Panc1 (cell line): ENCODE measurements at regions of chr21 and their contacts with region 1.

Region 1: DNA sequence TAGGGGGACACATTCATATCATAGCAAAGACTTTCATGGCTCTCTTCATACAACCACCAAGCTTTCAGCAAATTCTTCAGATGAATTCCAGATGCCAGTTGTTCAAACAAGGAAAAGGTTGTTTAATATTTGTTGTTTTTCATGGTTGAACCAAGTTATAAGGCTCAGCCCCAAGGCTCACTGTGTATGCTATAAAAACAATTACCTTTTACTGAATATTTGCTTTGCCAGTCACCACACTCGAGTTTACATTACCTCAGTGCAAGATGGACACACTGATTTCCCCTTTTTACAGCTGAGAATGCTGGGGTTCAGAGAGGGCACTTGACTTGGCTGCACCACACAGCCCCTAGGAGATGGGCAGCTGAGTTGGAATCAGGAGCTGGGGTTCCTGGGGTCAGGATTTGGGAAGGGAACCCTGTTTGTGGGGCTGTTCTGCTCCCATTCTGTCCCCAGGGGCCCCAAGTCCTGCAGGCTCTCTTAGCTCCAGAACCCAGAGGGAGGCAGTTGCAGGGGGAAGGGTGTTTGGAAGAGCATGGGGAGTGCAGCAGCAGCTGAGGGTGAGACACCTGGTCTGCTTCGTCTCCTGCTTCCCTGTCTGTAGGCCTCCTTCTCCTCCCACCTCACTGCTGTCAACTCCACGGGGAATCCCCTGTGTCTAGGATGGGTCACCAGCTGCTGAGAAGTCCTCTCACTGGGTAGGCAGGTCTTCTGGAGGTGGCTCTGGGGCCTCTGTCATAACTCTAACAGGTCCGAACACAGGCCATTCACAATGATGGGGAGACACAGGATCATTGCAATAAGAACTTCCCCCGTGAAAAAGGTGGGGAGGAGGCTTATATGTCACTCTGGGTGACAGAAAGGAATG is 12.9 kb upstream of the TMPRSS2 start:
- DNase-seq: no peak
- ATAC-seq: no peak; the same call in 1 of the 2 replicates
- H3K4me3 ChIP-seq: no peak overlapping the region
- H3K27ac ChIP-seq: peak overlapping the region; percentile 59
- H3K4me1 ChIP-seq: peaks cover 8% of the 10 kb centered on the region; the same call in 1 of the 2 replicates
- H3K27me3 ChIP-seq: no peaks in the 10 kb centered on the region
- CTCF ChIP-seq: no peak

Region 2: GRCh38 chr21:41451753-41452676 is 68.8 kb before region 1 on chr21:
- CTCF ChIA-PET with region 1: interaction called, 10 read pairs
- POLR2A ChIA-PET with region 1: no interaction called
- in situ Hi-C with region 1: no loop called
- intact Hi-C with region 1: no loop called
- DNase-seq: no peak
- ATAC-seq: no peak
- H3K4me3 ChIP-seq: no peak overlapping the region
- H3K27ac ChIP-seq: no peak overlapping the region
- H3K4me1 ChIP-seq: no peaks in the 10 kb centered on the region
- H3K27me3 ChIP-seq: no peaks in the 10 kb centered on the region
- CTCF ChIP-seq: no peak

Region 3: GRCh38 chr21:41583274-41583790 is 62.5 kb after region 1 on chr21:
- CTCF ChIA-PET with region 1: no interaction called
- POLR2A ChIA-PET with region 1: no interaction called
- in situ Hi-C with region 1: no loop called
- intact Hi-C with region 1: loop called (anchors 10 kb)
- DNase-seq: peak; percentile 43
- ATAC-seq: peak; percentile 94
- H3K4me3 ChIP-seq: peak overlapping the region in 1 of 2 experiments; percentile 26; a peak in 1 of 4 replicates
- H3K27ac ChIP-seq: peak overlapping the region; percentile 82
- H3K4me1 ChIP-seq: peaks cover 33% of the 10 kb centered on the region
- H3K27me3 ChIP-seq: no peaks in the 10 kb centered on the region
- CTCF ChIP-seq: no peak